Ovary (tissue), 10 donors: ENCODE measurements at regions of chr1 and their contacts with region 1.

Region 1: DNA sequence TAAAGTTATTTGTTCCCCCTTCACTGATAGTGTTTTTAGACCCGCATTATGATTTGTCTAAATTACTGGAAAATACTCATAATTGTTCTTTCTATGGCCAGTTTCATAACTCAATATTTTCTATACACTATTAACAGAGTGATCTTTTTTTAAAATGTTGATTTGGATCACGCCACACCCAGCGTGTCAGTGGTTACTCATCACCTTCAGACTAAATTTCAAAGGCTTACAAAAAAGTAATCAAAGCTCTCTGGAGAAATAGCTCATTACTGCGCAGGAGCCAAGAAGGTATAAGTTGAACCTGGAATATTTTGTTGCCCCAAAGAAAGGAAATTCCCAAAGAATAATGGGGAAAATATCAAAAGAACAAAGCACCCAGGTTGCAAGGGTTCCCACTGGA is 104.9 kb downstream of the EVI5 start:
- DNase-seq: no peak
- H3K4me3 ChIP-seq: no peak overlapping the region
- H3K27ac ChIP-seq: no peak overlapping the region
- H3K4me1 ChIP-seq: no peaks in the 10 kb centered on the region
- H3K27me3 ChIP-seq: no peaks in the 10 kb centered on the region
- CTCF ChIP-seq: no peak
- EP300 ChIP-seq: no peak
- POLR2A ChIP-seq: no peak

Region 2: GRCh38 chr1:90821793-90822359 is 1858.1 kb before region 1 on chr1:
- intact Hi-C with region 1: loop called in 1 of 4 experiments (anchors 10 kb)
- DNase-seq: no peak
- H3K4me3 ChIP-seq: no peak overlapping the region
- H3K27ac ChIP-seq: no peak overlapping the region
- H3K4me1 ChIP-seq: no peaks in the 10 kb centered on the region
- H3K27me3 ChIP-seq: no peaks in the 10 kb centered on the region
- CTCF ChIP-seq: no peak
- EP300 ChIP-seq: no peak
- POLR2A ChIP-seq: no peak

Region 3: DNA sequence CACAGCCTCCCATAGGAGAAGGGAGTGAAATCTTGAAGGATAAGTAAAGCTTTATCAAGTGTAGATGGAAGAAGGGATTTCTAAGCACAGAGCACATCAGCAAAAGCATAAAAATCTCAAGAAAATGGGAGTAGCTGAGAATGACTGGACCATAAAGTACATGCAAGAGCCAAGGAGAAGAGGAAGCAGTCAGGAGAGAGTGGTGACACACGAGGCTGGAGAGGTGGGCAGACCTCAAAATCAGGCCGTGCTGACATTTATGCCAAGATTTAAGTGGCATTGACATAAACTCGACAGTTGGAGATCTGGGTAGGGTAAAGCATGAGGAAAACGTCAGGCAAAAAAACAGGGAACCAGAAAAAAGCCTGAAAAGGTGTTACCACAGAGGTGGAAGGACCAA is 255.6 kb before region 1 on chr1:
- intact Hi-C with region 1: no loop called
- DNase-seq: no peak
- H3K4me3 ChIP-seq: no peak overlapping the region
- H3K27ac ChIP-seq: no peak overlapping the region
- H3K4me1 ChIP-seq: no peaks in the 10 kb centered on the region
- H3K27me3 ChIP-seq: no peaks in the 10 kb centered on the region
- CTCF ChIP-seq: no peak
- EP300 ChIP-seq: no peak
- POLR2A ChIP-seq: no peak

Region 4: GRCh38 chr1:92527670-92528069 is 152.3 kb before region 1 on chr1:
- intact Hi-C with region 1: no loop called
- DNase-seq: no peak
- H3K4me3 ChIP-seq: no peak overlapping the region
- H3K27ac ChIP-seq: no peak overlapping the region
- H3K4me1 ChIP-seq: no peaks in the 10 kb centered on the region
- H3K27me3 ChIP-seq: no peaks in the 10 kb centered on the region
- CTCF ChIP-seq: no peak
- EP300 ChIP-seq: no peak
- POLR2A ChIP-seq: no peak

Region 5: GRCh38 chr1:92817986-92818764 is 138.2 kb after region 1 on chr1:
- intact Hi-C with region 1: no loop called
- DNase-seq: no peak
- H3K4me3 ChIP-seq: no peak overlapping the region
- H3K27ac ChIP-seq: no peak overlapping the region
- H3K4me1 ChIP-seq: no peaks in the 10 kb centered on the region
- H3K27me3 ChIP-seq: no peaks in the 10 kb centered on the region
- CTCF ChIP-seq: peak in 2 of 3 donors; percentile 24 to 26
- EP300 ChIP-seq: no peak
- POLR2A ChIP-seq: no peak